Mammary epithelial cell (primary cell): ENCODE measurements at regions of chr14 and their contacts with region 1.

Region 1: GRCh38 chr14:64159588-64159987 is 134.6 kb downstream of the ESR2 start:
- DNase-seq: no peak
- H3K4me3 ChIP-seq: no peak overlapping the region
- H3K27ac ChIP-seq: no peak overlapping the region
- H3K4me1 ChIP-seq: no peaks in the 10 kb centered on the region
- H3K27me3 ChIP-seq: no peaks in the 10 kb centered on the region
- CTCF ChIP-seq: no peak

Region 2: DNA sequence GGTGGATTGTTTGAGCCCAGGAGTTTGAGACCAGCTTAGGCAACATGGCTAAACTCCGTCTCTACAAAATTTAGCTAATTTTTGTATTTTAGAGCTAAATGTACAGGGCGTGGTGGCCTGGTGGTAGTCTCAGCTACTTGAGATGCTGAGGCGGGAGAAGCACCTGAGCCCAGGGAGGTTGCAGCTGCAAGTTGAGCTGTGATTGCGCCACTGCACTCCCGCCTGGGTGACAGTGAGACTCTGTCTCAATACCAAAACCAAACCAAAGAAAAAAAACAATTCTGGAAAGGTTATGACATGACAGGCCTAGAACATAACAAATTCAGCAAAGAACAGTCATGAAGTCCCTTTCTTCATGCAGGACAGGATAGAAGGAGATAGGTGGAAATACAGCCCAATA is 543.6 kb before region 1 on chr14:
- CTCF ChIA-PET with region 1: interaction called, 13 read pairs
- dilution Hi-C with region 1: no loop called
- in situ Hi-C with region 1: no loop called
- intact Hi-C with region 1: no loop called
- DNase-seq: peak; percentile 12
- H3K4me3 ChIP-seq: no peak overlapping the region
- H3K27ac ChIP-seq: no peak overlapping the region
- H3K4me1 ChIP-seq: peaks cover 6% of the 10 kb centered on the region
- H3K27me3 ChIP-seq: no peaks in the 10 kb centered on the region
- CTCF ChIP-seq: no peak

Region 3: DNA sequence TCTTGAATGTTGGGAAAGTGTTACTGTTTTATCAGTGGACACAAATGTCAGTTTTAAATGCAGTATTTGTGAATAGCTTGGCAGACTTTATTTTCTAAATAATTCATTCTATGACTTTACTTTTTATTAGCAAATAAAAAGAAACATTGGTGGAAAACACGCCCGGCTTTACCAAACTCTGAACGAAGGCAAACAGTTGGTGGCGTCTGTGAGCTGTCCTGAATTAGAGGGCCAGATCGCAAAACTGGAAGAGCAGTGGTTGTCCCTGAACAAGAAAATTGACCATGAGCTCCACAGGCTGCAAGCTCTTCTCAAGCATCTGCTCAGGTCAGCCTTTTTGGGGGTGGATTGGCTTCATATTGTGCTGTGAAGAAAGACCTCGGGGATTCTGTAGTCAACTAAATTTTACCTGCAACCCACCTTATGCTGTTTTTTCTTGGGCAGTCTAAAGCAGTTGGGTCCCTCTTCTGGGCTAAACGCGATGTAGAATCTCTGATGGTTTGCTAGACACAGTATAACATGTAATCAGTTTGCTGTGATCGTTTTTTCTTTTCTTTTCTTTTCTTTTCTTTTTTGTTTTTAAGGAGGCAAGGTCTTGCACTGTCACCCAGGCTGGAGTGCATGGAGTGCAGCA is 21.8 kb before region 1 on chr14:
- CTCF ChIA-PET with region 1: no interaction called
- dilution Hi-C with region 1: no loop called
- in situ Hi-C with region 1: no loop called
- intact Hi-C with region 1: no loop called
- DNase-seq: no peak
- H3K4me3 ChIP-seq: no peak overlapping the region
- H3K27ac ChIP-seq: no peak overlapping the region
- H3K4me1 ChIP-seq: no peaks in the 10 kb centered on the region
- H3K27me3 ChIP-seq: no peaks in the 10 kb centered on the region
- CTCF ChIP-seq: no peak